Activated B cell treated with CpG ODN at 0.5 μM for 24 hours (primary cell): ENCODE measurements at regions of chr17 and their contacts with region 1.

Region 1: GRCh38 chr17:10327640-10328039 is 45.2 kb downstream of the MYH13 start:
- DNase-seq: peak; percentile 55
- ATAC-seq: peak; percentile 62
- H3K4me3 Mint-ChIP-seq: no peak overlapping the region
- H3K27ac Mint-ChIP-seq: no peak overlapping the region
- H3K4me1 Mint-ChIP-seq: no peaks in the 10 kb centered on the region
- H3K27me3 Mint-ChIP-seq: peaks cover 10% of the 10 kb centered on the region
- CTCF ChIP-seq: peak; percentile 76

Region 2: GRCh38 chr17:9971991-9972599 is 355.5 kb before region 1 on chr17:
- CTCF ChIA-PET with region 1: no interaction called
- POLR2A ChIA-PET with region 1: no interaction called
- intact Hi-C with region 1: loop called (anchors 10 kb)
- DNase-seq: no peak
- ATAC-seq: no peak
- H3K4me3 Mint-ChIP-seq: no peak overlapping the region
- H3K27ac Mint-ChIP-seq: no peak overlapping the region
- H3K4me1 Mint-ChIP-seq: peaks cover under 1% of the 10 kb centered on the region
- H3K27me3 Mint-ChIP-seq: no peaks in the 10 kb centered on the region
- CTCF ChIP-seq: no peak